ENCODE measurements at regions of chr14 and their contacts with region 1.

Region 1: GRCh38 chr14:24051789-24052655 is at the start of gene CARMIL3:
- DNase-seq: peak; percentile 77

Region 2: GRCh38 chr14:24036169-24036962 is 15.7 kb before region 1 on chr14:
- CTCF ChIA-PET with region 1: interaction called, 4 read pairs
- POLR2A ChIA-PET with region 1: interaction called, 10 read pairs
- DNase-seq: peak; percentile 71

Region 3: GRCh38 chr14:24141097-24141880 is 89.3 kb after region 1 on chr14 and contains the start of gene EMC9:
- CTCF ChIA-PET with region 1: interaction called, 13 read pairs
- POLR2A ChIA-PET with region 1: interaction called, 12 read pairs
- DNase-seq: peak; percentile 91

Region 4: DNA sequence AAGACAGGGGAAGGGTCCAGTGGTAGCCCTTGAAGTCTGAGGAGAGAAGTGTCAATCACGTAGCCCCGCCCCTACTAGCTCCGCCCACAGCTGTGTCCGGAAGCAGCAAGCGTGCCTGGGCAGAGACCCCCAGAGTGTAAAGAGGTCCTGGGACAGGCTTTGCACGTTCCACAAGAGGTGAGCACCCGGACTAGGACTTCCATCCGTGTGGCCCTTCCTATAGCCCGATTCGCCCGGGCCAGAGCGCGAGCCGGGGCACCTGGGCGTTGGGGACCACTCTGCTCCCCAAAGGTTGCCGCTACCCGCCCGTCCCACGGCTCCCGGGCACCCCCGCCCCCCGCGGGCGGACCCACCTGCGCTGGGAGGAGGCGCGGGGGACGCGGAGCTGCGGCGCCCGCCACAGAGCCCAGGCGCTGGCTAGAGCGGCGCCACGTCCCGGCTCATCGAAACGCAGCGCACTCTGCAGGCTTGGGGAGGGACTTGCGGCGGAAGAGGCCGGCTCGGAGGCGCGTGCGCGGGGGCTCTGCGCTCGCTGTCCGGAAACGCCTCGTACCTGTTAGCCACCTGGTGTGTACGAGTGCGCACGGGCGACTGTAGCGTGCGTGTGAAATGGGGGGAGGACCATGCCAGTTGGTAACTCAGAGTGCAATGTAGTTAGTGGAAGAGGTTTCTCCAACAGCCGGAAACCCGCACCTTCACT is 219.3 kb after region 1 on chr14 and contains the start of gene RABGGTA:
- CTCF ChIA-PET with region 1: no interaction called
- POLR2A ChIA-PET with region 1: no interaction called
- DNase-seq: peak; percentile 94